Calu3 (cell line): ENCODE measurements at regions of chrX and their contacts with region 1.

Region 1: GRCh38 chrX:132219343-132219768 is at the start of gene RAP2C:
- DNase-seq: peak; percentile 76
- H3K4me3 Mint-ChIP-seq: peak within 1 kb of the TSS; percentile 91
- H3K27ac Mint-ChIP-seq: peak within 1 kb of the TSS; percentile 81
- H3K4me1 Mint-ChIP-seq: peaks cover 7% of the 10 kb centered on the region
- H3K27me3 Mint-ChIP-seq: no peaks in the 10 kb centered on the region
- CTCF ChIP-seq: peak; percentile 17
- total RNA-seq, gene RAP2C: 22.9 and 28.4 TPM in 2 replicates

Region 2: DNA sequence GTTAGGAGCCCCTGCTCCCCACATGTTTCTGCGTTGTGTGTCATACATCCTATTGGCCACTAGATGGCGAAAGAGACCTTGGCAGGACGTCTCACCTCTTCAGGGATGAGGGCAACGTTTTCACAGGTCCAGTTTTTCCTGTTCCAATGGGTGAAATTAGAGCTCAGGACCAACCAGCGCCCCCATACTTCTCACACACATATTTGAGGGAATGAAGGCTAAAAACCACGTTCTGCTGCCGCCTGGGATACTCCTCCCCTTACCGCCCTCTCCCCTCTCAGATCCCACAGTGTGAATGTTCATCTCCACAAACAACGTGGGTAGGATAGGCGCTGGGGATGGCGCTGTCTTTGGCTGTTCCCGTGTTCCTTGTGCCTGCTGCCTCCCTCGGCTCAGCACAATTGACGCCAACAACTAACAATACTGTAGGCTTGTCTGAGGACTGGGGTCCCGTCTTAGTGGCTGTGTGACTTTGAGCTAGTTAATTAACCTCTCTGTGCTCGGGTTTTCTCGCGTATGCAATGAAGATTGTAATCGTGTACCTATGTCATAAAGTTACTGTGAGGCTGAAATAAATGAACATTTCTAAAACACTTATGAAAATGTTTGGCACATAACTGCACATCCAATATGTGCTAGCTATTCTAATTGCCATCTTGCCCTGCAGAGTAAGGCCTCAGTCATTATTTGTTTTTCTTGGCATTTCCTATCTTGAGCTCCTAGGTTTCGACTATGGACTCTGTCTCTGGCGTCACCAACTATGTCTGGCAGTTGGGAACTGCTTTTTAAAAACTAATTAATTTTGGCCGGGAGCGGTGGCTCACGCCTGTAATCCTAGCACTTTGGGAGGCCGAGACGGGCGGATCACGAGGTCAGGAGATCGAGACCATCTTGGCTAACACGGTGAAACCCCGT is 377.6 kb before region 1 on chrX:
- CTCF ChIA-PET with region 1: interaction called, 5 read pairs
- intact Hi-C with region 1: loop called (anchors 2 kb)
- DNase-seq: peak; percentile 51
- H3K4me3 Mint-ChIP-seq: peak overlapping the region; percentile 21
- H3K27ac Mint-ChIP-seq: no peak overlapping the region
- H3K4me1 Mint-ChIP-seq: no peaks in the 10 kb centered on the region
- H3K27me3 Mint-ChIP-seq: no peaks in the 10 kb centered on the region
- CTCF ChIP-seq: peak; percentile 66

Region 3: GRCh38 chrX:132022967-132023895 is 196.1 kb before region 1 on chrX and contains the start of gene STK26:
- CTCF ChIA-PET with region 1: no interaction called
- intact Hi-C with region 1: loop called (anchors 2 kb)
- DNase-seq: peak; percentile 81
- H3K4me3 Mint-ChIP-seq: peak within 1 kb of the TSS; percentile 95
- H3K27ac Mint-ChIP-seq: peak within 1 kb of the TSS; percentile 86
- H3K4me1 Mint-ChIP-seq: peaks cover 11% of the 10 kb centered on the region
- H3K27me3 Mint-ChIP-seq: no peaks in the 10 kb centered on the region
- CTCF ChIP-seq: no peak
- total RNA-seq, gene STK26: 32.5 and 38.5 TPM in 2 replicates

Region 4: GRCh38 chrX:132092439-132093065 is 126.8 kb before region 1 on chrX:
- CTCF ChIA-PET with region 1: interaction called, 47 read pairs
- intact Hi-C with region 1: loop called (anchors 1 kb)
- DNase-seq: peak; percentile 52
- H3K4me3 Mint-ChIP-seq: no peak overlapping the region
- H3K27ac Mint-ChIP-seq: no peak overlapping the region
- H3K4me1 Mint-ChIP-seq: no peaks in the 10 kb centered on the region
- H3K27me3 Mint-ChIP-seq: no peaks in the 10 kb centered on the region
- CTCF ChIP-seq: peak; percentile 41

Region 5: DNA sequence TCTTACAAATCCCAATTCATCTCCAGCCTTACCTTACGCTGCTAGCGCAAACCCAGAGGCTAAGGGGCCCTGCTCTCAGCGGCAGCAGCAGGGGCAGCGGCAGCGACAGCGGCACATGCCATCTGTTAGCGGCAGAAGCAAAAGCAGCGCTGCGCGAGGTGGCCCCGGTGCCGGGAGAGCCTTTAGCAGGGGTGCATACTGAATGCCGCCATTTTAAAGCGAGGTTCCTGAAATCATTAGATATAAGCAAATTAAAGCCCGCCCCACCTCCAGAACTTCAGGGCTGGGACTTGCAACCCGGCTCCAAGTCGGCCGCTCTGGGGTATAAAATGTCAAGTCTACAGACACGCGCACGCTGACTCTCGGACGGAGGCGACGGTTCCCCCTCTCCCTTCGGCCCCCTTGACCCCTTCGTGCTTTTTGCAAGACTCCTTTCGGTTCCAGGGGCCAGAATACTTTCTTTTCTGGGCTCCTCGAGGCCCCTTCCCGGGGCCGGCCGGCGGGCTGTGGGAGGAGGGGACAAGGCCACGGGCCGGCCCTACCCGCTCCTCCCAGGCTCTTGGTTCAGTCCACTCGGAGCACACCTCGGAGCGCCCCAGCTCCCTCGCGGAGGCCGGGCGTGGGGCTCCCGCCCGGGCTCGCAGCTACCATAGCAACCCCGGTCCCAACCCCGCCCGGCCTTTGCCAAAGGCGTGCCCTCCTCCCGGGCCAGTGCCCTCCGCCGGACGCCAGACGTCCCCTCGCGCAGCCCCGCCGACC is 269.6 kb after region 1 on chrX and contains the start of gene MBNL3:
- CTCF ChIA-PET with region 1: no interaction called
- intact Hi-C with region 1: loop called (anchors 10 kb)
- DNase-seq: peak; percentile 69
- H3K4me3 Mint-ChIP-seq: peak within 1 kb of the TSS; percentile 71
- H3K27ac Mint-ChIP-seq: peak within 1 kb of the TSS; percentile 79
- H3K4me1 Mint-ChIP-seq: peaks cover 10% of the 10 kb centered on the region
- H3K27me3 Mint-ChIP-seq: no peaks in the 10 kb centered on the region
- CTCF ChIP-seq: no peak
- total RNA-seq, gene MBNL3: 18.9 and 21.0 TPM in 2 replicates